ENCODE measurements at regions of chr3 and their contacts with region 1.

Region 1: DNA sequence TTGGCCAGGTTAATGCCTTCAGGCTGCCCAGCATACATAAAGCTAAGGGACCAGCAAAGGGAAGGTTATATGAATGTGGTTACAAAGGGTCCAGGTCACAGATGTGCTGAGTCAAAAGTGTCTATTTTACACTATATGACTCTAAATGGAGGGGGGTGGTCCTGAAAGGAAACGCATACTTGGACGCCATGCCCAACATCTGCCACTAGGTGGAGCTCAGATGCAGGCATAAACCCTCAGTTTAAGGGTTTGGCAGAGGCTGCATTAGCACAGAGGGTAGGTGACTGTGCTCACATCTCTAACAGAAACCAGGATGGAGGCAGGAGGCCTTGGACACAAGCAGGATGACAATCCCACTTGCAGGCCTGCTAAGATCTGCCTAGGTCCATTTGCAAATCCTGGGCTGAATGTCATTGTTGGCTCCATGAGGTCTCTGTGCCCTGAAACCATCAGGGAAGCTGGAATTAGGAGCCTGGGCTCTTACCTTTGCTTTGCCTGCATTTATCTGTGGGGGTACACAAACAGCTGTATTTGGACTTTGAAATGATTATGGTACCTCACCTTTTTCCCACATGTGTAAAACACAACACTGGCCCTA is 55.8 kb downstream of the ZNF621 start:
- DNase-seq: no peak
- ATAC-seq: peak; percentile 83
- H3K4me3 ChIP-seq: no peak overlapping the region
- H3K27ac ChIP-seq: no peak overlapping the region
- H3K4me1 ChIP-seq: peaks cover 6% of the 10 kb centered on the region
- H3K27me3 ChIP-seq: no peaks in the 10 kb centered on the region
- CTCF ChIP-seq: peak; percentile 94

Region 2: DNA sequence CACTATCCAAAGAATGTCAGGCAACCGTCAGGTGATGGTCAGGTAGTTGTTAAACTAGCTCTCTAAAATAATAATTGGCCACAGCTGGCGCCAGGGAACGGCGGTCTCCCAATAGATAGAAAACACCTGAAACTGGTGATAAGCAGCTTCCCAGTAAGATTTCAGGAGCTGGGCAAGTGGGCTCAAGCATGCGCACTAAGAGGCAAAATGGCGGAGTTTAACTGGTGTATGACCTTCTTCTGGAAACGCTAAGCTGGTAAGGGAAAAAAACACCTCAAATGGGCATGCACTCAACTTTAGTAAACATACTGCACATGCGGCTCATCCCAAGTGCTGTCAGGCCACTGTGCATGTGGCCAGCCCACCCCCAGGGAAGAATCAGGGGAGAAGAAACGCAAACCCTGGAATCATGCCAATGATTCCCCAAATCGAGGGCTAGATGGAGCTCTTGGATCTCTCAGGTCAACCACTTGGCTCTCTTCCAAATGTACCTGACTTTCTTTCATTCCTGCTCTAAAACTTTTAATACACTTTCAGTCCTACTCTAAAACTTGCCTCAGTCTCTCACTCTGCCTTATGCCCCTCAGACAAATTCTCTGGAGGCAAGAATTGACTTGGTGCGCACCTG is 139.2 kb after region 1 on chr3:
- intact Hi-C with region 1: no loop called
- DNase-seq: no peak
- ATAC-seq: peak; percentile 37
- H3K4me3 ChIP-seq: no peak overlapping the region
- H3K27ac ChIP-seq: no peak overlapping the region
- H3K4me1 ChIP-seq: peaks cover 5% of the 10 kb centered on the region
- H3K27me3 ChIP-seq: no peaks in the 10 kb centered on the region
- CTCF ChIP-seq: peak; percentile 39

Region 3: DNA sequence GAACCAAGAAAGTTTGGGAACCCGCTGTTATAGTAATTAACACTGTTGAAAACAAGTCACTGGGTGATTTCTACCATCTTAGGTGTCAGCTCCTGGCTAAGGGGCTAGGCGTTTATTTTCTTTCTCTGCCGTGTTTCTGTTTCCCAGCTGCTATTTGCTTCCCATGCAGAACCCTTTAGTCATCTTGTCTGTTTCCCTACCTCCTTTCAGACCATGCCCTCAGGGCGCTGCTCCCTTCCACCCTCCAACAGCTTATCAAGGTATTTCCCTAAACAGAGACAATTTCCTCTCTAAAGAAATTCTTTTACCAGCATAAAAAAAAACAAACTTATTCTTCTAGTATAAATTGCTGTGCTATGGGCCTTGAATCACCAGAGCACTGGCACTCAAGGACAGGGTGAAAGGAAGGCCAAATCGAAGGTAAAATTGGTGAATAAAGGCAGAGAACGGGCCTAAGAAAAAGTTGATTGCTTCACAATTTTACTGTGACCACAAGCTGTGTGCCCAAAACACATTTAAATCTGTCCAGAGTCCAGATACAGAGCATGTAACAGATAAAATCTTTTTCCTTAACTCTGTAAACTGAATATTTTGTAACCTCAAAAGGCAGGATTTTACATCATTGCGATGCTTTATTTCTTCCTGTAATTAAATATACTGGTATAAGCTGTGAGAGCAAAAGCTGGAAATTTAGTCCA is 263.4 kb after region 1 on chr3:
- intact Hi-C with region 1: no loop called
- DNase-seq: no peak
- ATAC-seq: no peak
- H3K4me3 ChIP-seq: no peak overlapping the region
- H3K27ac ChIP-seq: no peak overlapping the region
- H3K4me1 ChIP-seq: no peaks in the 10 kb centered on the region
- H3K27me3 ChIP-seq: no peaks in the 10 kb centered on the region
- CTCF ChIP-seq: no peak

Region 4: DNA sequence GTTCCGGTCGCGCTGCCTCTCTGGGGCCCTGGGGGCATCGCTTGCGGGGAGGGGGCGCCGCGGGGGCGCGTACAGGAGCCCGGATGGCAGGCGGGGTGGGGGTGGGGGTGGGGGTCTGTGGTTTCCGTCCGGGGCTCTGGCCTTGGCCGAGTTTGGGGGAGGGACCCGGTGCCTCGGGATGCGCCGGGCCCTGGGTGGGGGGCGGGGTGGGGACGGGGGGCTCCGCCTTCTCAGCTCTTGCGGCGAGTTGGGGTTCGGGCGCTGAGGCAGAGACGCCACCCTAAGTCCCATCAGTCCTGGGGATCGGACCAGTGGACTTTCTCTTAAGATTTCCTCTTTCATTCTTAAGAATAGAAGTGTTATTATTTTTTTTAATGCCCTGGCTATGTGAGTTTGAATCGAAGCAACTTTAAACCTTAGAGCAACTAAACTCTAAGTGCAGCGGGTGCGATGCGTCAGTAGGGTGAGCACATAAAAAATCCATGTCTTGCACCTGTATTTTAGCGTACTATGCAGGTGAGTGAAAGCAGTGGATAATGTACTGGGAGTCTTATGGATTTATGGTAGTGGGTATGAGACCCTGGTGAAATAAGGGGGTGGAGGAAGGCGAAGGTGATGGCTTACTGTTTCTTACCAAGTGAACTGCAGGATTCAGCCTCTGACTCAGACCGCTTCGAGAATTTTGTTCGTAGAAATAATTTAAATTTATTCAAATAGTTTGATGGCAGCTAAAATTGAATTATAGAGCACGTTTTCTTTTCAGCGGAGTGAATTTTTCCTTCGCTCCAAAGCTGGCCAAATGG is 619.5 kb after region 1 on chr3:
- intact Hi-C with region 1: loop called (anchors 10 kb)
- DNase-seq: peak; percentile 73
- ATAC-seq: peak; percentile 3
- H3K4me3 ChIP-seq: peak overlapping the region; percentile 78
- H3K27ac ChIP-seq: peak overlapping the region; percentile 97
- H3K4me1 ChIP-seq: peaks cover 42% of the 10 kb centered on the region
- H3K27me3 ChIP-seq: no peaks in the 10 kb centered on the region
- CTCF ChIP-seq: no peak

Region 5: GRCh38 chr3:41881233-41881821 is 1300.7 kb after region 1 on chr3:
- intact Hi-C with region 1: loop called (anchors 5 kb)
- DNase-seq: no peak
- ATAC-seq: no peak
- H3K4me3 ChIP-seq: no peak overlapping the region
- H3K27ac ChIP-seq: no peak overlapping the region
- H3K4me1 ChIP-seq: no peaks in the 10 kb centered on the region
- H3K27me3 ChIP-seq: no peaks in the 10 kb centered on the region
- CTCF ChIP-seq: peak; percentile 69